T-cell (primary cell): ENCODE measurements at regions of chr6 and their contacts with region 1.

Region 1: DNA sequence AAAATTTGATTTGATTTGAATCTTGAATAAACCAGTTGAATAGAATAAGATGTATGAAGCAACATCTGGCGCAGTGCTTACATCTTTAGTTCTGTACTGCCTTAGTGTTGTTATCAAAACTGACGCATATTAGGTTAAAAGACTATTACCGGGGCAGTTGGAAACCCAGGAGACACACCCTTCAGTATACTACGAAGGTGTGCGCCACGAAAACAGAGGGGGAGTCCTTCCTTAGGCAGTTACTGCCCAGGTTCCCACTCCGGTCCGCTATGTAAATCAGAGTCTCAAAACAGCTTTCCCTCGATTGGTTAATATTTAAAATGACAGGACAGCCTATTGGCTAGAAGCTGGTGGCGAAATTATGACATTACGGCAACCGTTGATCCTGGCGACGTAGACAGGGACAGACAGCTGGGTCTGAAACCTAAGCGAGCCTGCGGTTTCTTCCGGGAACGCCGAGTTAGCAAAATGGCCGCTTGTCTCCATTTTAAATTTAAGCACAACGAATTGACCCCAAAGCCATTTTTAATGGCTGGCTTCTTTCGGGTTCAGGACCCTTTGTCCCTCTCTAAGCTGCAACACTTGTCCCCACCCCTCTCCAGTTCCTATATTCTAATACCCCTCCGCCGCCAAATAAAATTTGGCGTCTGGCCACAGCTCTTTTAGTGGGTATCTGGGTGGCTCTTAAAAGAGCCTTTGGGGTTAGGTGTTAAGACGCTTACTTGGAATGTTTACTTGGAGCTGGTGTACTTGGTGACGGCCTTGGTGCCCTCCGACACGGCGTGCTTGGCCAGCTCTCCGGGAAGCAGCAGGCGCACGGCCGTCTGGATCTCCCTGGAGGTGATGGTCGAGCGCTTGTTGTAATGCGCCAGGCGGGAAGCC is 35.8 kb downstream of the HFE start:
- DNase-seq: peak; percentile 76 to 97 (median 91)
- ATAC-seq: peak; percentile 64 to 70 (median 68)
- H3K4me3 ChIP-seq: peak overlapping the region; percentile 88 to 100
- H3K4me3 Mint-ChIP-seq: peak overlapping the region; percentile 99 to 100 (median 99)
- H3K27ac ChIP-seq: peak overlapping the region; percentile 87
- H3K27ac Mint-ChIP-seq: peak overlapping the region; percentile 99
- H3K4me1 ChIP-seq: peaks cover 10 to 15% of the 10 kb centered on the region in 2 experiments
- H3K4me1 Mint-ChIP-seq: peaks cover 32 to 47% (median 35%) of the 10 kb centered on the region in 3 donors
- H3K27me3 ChIP-seq: no peaks in the 10 kb centered on the region
- H3K27me3 Mint-ChIP-seq: no peaks in the 10 kb centered on the region

Region 2: DNA sequence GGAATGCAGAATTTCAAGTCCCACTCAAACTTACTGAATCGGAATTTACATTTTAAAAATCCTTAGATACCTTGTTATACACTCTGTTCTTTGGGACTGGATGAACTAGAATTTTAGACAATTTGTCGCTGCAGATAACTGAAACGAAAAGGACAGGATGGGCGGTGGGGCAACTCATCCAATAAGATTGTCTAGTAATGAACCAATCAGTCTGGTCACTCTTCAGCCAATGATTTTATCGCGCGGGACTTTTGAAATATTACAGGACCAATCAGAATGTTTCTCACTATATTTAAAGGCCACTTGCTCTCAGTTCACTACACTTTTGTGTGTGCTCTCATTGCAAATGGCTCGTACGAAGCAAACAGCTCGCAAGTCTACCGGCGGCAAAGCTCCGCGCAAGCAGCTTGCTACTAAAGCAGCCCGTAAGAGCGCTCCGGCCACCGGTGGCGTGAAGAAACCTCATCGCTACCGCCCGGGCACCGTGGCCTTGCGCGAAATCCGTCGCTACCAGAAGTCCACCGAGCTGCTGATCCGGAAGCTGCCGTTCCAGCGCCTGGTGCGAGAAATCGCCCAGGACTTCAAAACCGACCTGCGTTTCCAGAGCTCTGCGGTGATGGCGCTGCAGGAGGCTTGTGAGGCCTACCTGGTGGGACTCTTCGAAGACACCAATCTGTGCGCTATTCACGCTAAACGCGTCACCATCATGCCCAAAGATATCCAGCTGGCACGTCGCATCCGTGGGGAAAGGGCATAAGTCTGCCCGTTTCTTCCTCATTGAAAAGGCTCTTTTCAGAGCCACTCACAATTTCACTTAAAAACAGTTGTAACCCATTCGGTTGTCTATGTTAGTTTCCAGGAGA is 77.7 kb before region 1 on chr6:
- CTCF ChIA-PET with region 1: interaction called in 1 of 2 experiments, 9 read pairs
- POLR2A ChIA-PET with region 1: interaction called, 21 to 103 read pairs
- DNase-seq: peak; percentile 45 to 90 (median 78)
- ATAC-seq: peak; percentile 63 to 66 (median 64)
- H3K4me3 ChIP-seq: peak overlapping the region; percentile 77 to 83
- H3K4me3 Mint-ChIP-seq: peak overlapping the region; percentile 84 to 91 (median 90)
- H3K27ac ChIP-seq: peak overlapping the region; percentile 90
- H3K27ac Mint-ChIP-seq: peak overlapping the region; percentile 98
- H3K4me1 ChIP-seq: peaks cover 5 to 26% of the 10 kb centered on the region in 2 experiments
- H3K4me1 Mint-ChIP-seq: peaks cover 15 to 27% (median 26%) of the 10 kb centered on the region in 3 donors
- H3K27me3 ChIP-seq: no peaks in the 10 kb centered on the region
- H3K27me3 Mint-ChIP-seq: no peaks in the 10 kb centered on the region

Region 3: DNA sequence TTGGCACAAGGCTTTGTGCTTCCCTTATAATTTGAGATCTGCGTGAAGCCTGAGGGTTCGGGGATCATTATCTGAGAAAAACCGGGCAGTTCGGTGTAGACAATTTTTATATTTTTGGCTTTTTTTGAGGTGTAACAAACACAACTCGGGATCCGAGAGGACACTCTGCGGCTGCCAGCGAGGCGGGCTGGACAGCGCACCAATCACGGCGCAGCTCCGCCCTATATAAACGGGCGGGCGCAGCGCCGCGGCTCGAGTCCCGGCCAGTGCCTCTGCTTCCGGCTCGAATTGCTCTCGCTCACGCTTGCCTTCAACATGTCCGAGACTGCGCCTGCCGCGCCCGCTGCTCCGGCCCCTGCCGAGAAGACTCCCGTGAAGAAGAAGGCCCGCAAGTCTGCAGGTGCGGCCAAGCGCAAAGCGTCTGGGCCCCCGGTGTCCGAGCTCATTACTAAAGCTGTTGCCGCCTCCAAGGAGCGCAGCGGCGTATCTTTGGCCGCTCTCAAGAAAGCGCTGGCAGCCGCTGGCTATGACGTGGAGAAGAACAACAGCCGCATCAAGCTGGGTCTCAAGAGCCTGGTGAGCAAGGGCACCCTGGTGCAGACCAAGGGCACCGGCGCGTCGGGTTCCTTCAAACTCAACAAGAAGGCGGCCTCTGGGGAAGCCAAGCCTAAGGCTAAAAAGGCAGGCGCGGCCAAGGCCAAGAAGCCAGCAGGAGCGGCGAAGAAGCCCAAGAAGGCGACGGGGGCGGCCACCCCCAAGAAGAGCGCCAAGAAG is 33.2 kb after region 1 on chr6:
- CTCF ChIA-PET with region 1: interaction called in 1 of 2 experiments, 37 read pairs
- POLR2A ChIA-PET with region 1: interaction called, 167 to 560 read pairs
- DNase-seq: peak; percentile 74 to 91 (median 83)
- ATAC-seq: peak; percentile 41 to 65 (median 63)
- H3K4me3 ChIP-seq: peak overlapping the region; percentile 73 to 87
- H3K4me3 Mint-ChIP-seq: peak overlapping the region; percentile 91 to 98 (median 97)
- H3K27ac ChIP-seq: peak overlapping the region; percentile 90
- H3K27ac Mint-ChIP-seq: peak overlapping the region; percentile 94 to 98
- H3K4me1 ChIP-seq: peaks cover 15 to 31% of the 10 kb centered on the region in 2 experiments
- H3K4me1 Mint-ChIP-seq: peaks cover 28 to 60% (median 40%) of the 10 kb centered on the region in 3 donors
- H3K27me3 ChIP-seq: no peaks in the 10 kb centered on the region
- H3K27me3 Mint-ChIP-seq: no peaks in the 10 kb centered on the region

Region 4: DNA sequence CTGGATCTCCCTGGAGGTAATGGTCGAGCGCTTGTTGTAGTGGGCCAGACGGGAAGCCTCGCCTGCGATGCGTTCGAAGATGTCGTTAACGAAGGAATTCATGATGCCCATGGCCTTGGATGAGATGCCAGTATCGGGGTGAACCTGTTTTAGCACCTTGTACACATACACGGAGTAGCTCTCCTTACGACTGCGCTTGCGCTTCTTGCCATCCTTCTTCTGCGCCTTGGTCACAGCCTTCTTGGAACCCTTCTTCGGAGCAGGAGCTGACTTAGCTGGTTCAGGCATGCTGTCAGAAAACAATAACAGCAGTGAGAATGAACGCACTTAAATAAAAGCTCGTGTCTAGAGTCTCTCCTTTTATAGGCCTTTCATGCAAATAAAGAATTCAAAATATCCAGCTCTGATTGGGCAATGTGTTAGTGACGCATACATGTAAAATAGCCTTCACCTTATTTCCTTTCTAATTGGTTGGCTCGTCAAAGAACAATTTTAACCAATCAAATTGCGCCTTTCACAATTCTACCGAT is 93.4 kb after region 1 on chr6:
- CTCF ChIA-PET with region 1: interaction called in 1 of 2 experiments, 13 read pairs
- POLR2A ChIA-PET with region 1: interaction called, 19 to 127 read pairs
- DNase-seq: peak; percentile 56 to 93 (median 76)
- ATAC-seq: peak; percentile 77 to 87 (median 83)
- H3K4me3 ChIP-seq: peak overlapping the region; percentile 73 to 91
- H3K4me3 Mint-ChIP-seq: no peak overlapping the region
- H3K27ac ChIP-seq: peak overlapping the region; percentile 94
- H3K27ac Mint-ChIP-seq: no peak overlapping the region
- H3K4me1 ChIP-seq: peaks cover 13 to 32% of the 10 kb centered on the region in 2 experiments
- H3K4me1 Mint-ChIP-seq: peaks cover 0 to 8% (median 5%) of the 10 kb centered on the region in 3 donors
- H3K27me3 ChIP-seq: no peaks in the 10 kb centered on the region
- H3K27me3 Mint-ChIP-seq: no peaks in the 10 kb centered on the region

Region 5: GRCh38 chr6:26524722-26525370 is 401.8 kb after region 1 on chr6:
- CTCF ChIA-PET with region 1: no interaction called
- POLR2A ChIA-PET with region 1: interaction called in 1 of 2 experiments, 14 read pairs
- DNase-seq: no peak
- ATAC-seq: no peak
- H3K4me3 ChIP-seq: no peak overlapping the region
- H3K4me3 Mint-ChIP-seq: no peak overlapping the region
- H3K27ac ChIP-seq: no peak overlapping the region
- H3K27ac Mint-ChIP-seq: no peak overlapping the region
- H3K4me1 ChIP-seq: peaks cover 5 to 12% of the 10 kb centered on the region in 2 experiments
- H3K4me1 Mint-ChIP-seq: peaks cover 33 to 53% (median 52%) of the 10 kb centered on the region in 3 donors
- H3K27me3 ChIP-seq: no peaks in the 10 kb centered on the region
- H3K27me3 Mint-ChIP-seq: no peaks in the 10 kb centered on the region

Region 6: GRCh38 chr6:27864906-27865849 is 1742.1 kb after region 1 on chr6:
- CTCF ChIA-PET with region 1: no interaction called
- POLR2A ChIA-PET with region 1: interaction called, 3 to 14 read pairs
- DNase-seq: peak; percentile 30 to 95 (median 62)
- ATAC-seq: peak; percentile 78 to 85 (median 80)
- H3K4me3 ChIP-seq: peak overlapping the region; percentile 76 to 96
- H3K4me3 Mint-ChIP-seq: peak overlapping the region; percentile 98 to 99 (median 98)
- H3K27ac ChIP-seq: peak overlapping the region; percentile 78
- H3K27ac Mint-ChIP-seq: peak overlapping the region; percentile 89 to 96
- H3K4me1 ChIP-seq: peaks cover 14 to 38% of the 10 kb centered on the region in 2 experiments
- H3K4me1 Mint-ChIP-seq: peaks cover 43 to 48% (median 45%) of the 10 kb centered on the region in 3 donors
- H3K27me3 ChIP-seq: no peaks in the 10 kb centered on the region
- H3K27me3 Mint-ChIP-seq: no peaks in the 10 kb centered on the region